Activated T-helper 1 cell treated with anti-CD3 and anti-CD28 coated beads, Interleukin-12 subunit alpha, Interleukin-12 subunit beta, Interleukin-2, Interleukin-4 antibody, amounts not matched to agents 30 ng/mL and 10 ng/mL and 1 ng/mL, durations not matched to agents 14 hours and 24 hours and 36 hours (primary cell): ENCODE measurements at regions of chr1 and their contacts with region 1.

Region 1: DNA sequence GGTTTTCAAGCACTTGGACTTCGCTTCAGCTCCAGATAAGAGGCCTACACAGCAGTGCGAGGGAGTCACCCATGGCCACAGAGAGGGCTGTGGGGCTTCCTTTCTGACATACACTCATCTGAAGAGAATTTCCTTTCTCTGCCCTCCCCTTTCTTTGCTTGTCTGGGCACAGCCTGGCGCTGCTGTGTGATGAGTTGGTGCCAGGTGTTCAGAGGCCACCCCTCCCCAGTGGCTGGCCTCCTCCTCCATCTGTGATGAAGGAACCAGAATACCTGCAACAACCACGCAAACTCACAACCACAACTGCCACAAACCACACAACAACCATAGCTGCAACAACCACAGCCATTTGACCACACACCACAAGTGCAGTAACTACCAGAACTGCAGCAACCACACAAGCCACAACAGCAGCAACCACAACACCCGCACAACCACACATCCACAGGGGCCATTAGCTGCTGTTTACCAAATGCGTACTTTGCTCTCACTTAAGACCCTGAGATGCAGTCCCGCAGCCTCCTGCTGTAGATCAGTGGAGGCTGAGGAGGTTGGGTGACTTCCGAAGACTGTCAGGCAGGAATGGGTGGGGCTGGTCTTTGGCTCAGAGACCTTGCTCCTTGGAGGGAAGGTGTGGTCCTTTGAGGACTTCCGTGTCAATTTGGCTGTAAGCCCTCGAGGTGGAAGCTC is 71.1 kb downstream of the IER5 start:
- DNase-seq: peak; percentile 62
- H3K4me3 Mint-ChIP-seq: peak overlapping the region; percentile 30
- H3K27ac Mint-ChIP-seq: peak overlapping the region; percentile 85
- H3K4me1 Mint-ChIP-seq: peaks cover 33% of the 10 kb centered on the region
- H3K27me3 Mint-ChIP-seq: peaks cover 31% of the 10 kb centered on the region

Region 2: DNA sequence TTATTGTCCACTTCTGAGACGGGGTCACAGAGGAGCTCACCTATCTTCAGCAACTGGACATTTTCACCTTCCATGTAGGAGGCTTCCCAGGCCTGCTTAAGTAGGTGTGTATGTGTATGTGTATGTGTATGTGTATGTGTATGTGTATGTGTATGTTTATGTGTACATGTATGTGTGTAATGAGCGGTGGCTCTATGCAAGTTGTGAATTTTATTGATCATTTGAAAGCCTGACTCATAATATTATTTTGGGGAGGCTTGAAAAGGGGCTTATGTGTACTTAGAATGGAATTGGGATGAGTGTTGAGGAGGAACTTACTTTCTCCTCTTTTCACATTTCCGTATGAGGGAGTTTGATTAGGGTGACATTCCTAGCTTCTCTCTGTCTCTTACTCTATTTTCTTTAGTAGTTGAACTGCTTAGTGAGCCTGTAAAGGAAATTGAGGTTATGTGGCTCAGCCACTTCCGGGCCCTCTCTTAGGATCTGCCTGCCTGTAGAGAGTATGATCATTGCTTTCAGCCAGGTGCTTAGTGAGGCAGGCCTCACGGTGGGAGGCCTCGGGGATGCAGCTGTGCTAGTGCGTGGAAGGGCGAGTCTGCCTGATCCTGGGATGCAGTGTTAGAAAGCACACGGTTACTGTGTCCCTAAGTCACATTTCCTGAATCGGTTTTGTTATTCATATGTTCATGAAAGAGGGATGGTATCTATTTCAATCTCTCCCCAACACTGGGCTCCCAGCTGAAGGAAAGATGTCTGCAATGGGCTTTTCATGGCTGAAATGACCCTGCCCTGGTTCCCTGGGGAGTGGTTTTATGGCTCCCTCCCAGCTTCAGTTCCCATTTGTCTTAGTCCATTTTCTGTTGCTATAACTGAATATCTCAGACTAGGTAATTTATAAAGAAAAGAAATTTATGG is 10.0 kb before region 1 on chr1:
- intact Hi-C with region 1: loop called (anchors 1 kb)
- DNase-seq: peak; percentile 77
- H3K4me3 Mint-ChIP-seq: no peak overlapping the region
- H3K27ac Mint-ChIP-seq: peak overlapping the region; percentile 54
- H3K4me1 Mint-ChIP-seq: peaks cover 39% of the 10 kb centered on the region
- H3K27me3 Mint-ChIP-seq: peaks cover 16% of the 10 kb centered on the region

Region 3: GRCh38 chr1:181257117-181257516 is 97.5 kb after region 1 on chr1:
- intact Hi-C with region 1: no loop called
- DNase-seq: no peak
- H3K4me3 Mint-ChIP-seq: no peak overlapping the region
- H3K27ac Mint-ChIP-seq: no peak overlapping the region
- H3K4me1 Mint-ChIP-seq: no peaks in the 10 kb centered on the region
- H3K27me3 Mint-ChIP-seq: peaks cover 8% of the 10 kb centered on the region